Activated CD4-positive, alpha-beta T cell treated with anti-CD3 and anti-CD28 coated beads, Interleukin-2, amount 10 ng/mL, durations not matched to agents 7 days and 5 days (primary cell): ENCODE measurements at regions of chr17 and their contacts with region 1.

Region 1: DNA sequence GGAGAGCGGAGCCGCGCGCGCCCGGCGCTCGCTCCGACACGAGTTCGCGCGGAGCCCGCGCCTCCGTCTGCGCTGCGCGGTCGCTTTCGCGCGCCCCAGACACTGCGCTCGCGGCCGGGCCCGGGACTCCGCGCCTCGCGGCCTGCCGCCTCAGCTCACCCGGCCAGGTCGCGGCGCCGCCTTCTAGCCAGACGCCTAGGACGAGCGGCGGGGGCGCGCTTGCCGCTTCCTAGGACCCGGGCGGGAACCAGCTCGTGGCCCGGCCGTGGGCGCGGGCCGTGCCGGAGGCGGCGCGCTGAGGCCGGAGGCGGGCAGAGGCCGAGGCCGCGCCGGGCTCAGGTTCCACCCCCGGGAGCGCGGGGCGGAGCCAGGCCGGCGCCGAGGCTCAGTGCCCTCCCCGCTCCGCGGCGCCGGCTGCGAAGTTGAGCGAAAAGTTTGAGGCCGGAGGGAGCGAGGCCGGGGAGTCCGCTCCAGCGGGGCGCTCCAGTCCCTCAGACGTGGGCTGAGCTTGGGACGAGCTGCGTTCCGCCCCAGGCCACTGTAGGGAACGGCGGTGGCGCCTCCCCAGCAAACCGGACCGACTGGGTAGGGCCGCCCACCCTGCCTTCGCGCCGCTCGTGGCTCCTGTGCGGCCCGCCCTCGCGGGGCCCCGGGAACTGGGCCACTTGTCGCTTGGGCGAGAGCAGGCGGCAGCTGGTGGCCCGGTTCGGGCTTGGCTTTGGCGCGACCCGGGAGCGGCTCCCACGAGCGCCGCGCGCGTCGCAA is at the start of gene SPHK1:
- DNase-seq: peak; percentile 66
- H3K4me3 Mint-ChIP-seq: peak within 1 kb of the TSS; percentile 79
- H3K27ac Mint-ChIP-seq: peak within 1 kb of the TSS; percentile 86
- H3K4me1 Mint-ChIP-seq: peaks cover 18% of the 10 kb centered on the region
- H3K27me3 Mint-ChIP-seq: peaks cover 2% of the 10 kb centered on the region
- total RNA-seq, gene SPHK1: 1.4 to 1.6 TPM

Region 2: GRCh38 chr17:76327696-76328095 is 56.7 kb before region 1 on chr17:
- CTCF ChIA-PET with region 1: no interaction called
- POLR2A ChIA-PET with region 1: no interaction called
- DNase-seq: no peak
- H3K4me3 Mint-ChIP-seq: no peak overlapping the region
- H3K27ac Mint-ChIP-seq: no peak overlapping the region
- H3K4me1 Mint-ChIP-seq: no peaks in the 10 kb centered on the region
- H3K27me3 Mint-ChIP-seq: no peaks in the 10 kb centered on the region

Region 3: GRCh38 chr17:76353599-76354316 is 30.6 kb before region 1 on chr17 and contains the start of gene PRPSAP1:
- CTCF ChIA-PET with region 1: interaction called, 26 read pairs
- POLR2A ChIA-PET with region 1: interaction called, 4 read pairs
- DNase-seq: peak; percentile 85
- H3K4me3 Mint-ChIP-seq: peak within 1 kb of the TSS; percentile 83
- H3K27ac Mint-ChIP-seq: peak within 1 kb of the TSS; percentile 98
- H3K4me1 Mint-ChIP-seq: peaks cover 29% of the 10 kb centered on the region
- H3K27me3 Mint-ChIP-seq: no peaks in the 10 kb centered on the region
- total RNA-seq, gene PRPSAP1: 58.7 to 63.0 TPM

Region 4: GRCh38 chr17:76365256-76365903 is 19.0 kb before region 1 on chr17:
- CTCF ChIA-PET with region 1: interaction called, 14 read pairs
- POLR2A ChIA-PET with region 1: no interaction called
- DNase-seq: no peak
- H3K4me3 Mint-ChIP-seq: no peak overlapping the region
- H3K27ac Mint-ChIP-seq: no peak overlapping the region
- H3K4me1 Mint-ChIP-seq: peaks cover 2% of the 10 kb centered on the region
- H3K27me3 Mint-ChIP-seq: peaks cover 4% of the 10 kb centered on the region

Region 5: DNA sequence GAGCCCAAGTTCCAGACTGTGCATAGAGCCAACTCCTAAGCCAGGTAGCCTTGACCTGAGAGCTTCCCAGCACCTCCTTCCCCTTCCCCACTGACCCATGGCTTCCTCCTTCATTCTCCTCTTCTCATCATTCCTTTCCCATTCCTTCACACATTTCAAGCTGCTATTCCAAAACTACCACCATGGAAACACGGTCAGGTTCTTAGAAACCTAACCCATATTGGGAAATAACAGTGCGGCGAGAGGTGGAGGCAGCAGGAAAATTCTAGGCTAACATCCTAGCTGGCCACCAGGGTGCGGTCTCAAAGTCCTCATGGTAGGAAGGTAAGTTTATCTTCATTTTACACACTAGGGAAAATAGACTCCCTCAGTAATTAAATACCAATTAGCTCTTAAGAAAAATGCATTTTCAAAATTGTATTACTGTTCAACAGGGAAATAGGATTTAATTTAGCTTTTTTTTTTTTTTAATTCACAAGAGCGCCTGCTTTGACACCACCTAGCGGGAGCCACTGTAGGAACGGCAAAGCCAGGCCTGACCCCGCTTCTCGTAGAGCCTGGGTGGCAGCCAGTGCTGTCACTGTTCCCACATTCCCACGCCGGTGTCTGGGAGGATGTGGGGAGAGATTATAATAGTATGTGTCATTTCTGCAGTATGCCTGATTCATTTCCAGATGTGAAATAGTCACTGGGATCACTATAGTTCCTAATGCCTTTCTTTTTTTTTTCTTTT is 14.0 kb before region 1 on chr17:
- CTCF ChIA-PET with region 1: interaction called, 14 read pairs
- POLR2A ChIA-PET with region 1: no interaction called
- DNase-seq: no peak
- H3K4me3 Mint-ChIP-seq: no peak overlapping the region
- H3K27ac Mint-ChIP-seq: no peak overlapping the region
- H3K4me1 Mint-ChIP-seq: no peaks in the 10 kb centered on the region
- H3K27me3 Mint-ChIP-seq: no peaks in the 10 kb centered on the region